ENCODE measurements at regions of chr6 and their contacts with region 1.

Region 1: GRCh38 chr6:131059486-131059885 is 3.6 kb downstream of the EPB41L2 start:
- DNase-seq: no peak

Region 2: DNA sequence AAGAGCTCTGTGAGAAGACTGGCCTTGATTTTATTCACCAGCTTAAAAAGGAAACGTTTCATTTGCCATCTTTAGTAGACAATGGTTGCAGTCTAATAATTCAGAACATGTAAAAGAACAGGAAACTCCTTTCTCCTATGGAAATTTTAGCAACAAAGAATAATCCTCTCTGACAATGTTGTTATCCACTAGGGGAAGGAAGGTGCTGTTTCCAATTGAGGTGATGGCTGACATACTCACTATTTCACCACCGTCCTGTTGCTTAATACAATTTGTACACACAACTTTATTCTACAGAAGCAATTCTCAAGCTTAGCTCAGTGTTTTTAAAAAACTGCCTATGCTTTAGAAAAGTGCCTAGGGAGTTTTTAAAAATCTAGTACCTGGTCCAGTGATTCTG is 1542.2 kb before region 1 on chr6:
- intact Hi-C with region 1: loop called in 1 of 2 experiments (anchors 5 kb)
- DNase-seq: no peak

Region 3: DNA sequence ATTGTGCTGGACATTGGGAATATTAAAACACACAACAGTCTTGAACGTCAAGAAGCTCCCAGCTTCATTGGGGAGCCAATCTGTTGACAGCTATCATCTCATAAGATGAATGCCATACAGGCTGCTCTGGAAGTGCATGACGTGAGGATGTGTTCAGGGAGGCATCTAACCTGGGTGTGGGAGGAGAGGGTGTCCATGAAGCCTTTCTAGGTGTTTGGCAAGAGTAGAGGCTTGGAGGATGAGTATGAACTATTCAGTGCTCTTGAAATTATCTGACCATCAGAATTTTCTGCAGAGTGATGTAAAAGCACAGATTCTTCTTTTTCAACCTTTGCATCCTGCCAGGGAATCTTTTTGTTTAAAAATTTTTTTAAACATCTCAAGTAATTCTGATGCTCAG is 87.4 kb after region 1 on chr6:
- intact Hi-C with region 1: no loop called
- DNase-seq: no peak

Region 4: DNA sequence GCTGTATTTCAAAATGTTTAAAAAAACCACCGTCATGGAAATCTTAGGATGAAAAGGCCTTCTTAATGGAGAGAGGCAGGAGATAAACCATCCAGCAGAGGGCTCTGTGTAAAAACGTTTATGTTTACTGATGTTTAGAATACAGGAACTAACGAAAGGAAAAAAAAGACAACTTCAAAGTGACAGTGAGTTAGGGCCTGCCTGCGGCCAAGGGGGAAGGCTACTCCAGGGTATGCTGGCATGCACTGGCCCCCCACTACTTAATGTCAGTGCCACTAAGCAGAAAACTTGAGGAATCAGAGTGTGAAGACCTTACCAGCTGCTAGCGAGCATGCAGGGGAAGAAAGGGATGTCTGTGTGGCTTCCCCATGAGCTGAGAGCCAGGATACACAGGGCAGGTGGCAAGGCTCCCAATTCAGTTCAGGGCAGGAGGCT is 123.5 kb after region 1 on chr6:
- intact Hi-C with region 1: no loop called
- DNase-seq: no peak

Region 5: GRCh38 chr6:131627724-131628682 is 568.5 kb after region 1 on chr6 and contains the start of gene MED23:
- intact Hi-C with region 1: no loop called
- DNase-seq: peak; percentile 99
- total RNA-seq, gene MED23: 19.0 to 22.2 TPM